Activated CD8-positive, alpha-beta memory T cell treated with anti-CD3 and anti-CD28 coated beads, Interleukin-2, amount 10 ng/mL, durations not matched to agents 7 days and 5 days (primary cell): ENCODE measurements at regions of chr14 and their contacts with region 1.

Region 1: DNA sequence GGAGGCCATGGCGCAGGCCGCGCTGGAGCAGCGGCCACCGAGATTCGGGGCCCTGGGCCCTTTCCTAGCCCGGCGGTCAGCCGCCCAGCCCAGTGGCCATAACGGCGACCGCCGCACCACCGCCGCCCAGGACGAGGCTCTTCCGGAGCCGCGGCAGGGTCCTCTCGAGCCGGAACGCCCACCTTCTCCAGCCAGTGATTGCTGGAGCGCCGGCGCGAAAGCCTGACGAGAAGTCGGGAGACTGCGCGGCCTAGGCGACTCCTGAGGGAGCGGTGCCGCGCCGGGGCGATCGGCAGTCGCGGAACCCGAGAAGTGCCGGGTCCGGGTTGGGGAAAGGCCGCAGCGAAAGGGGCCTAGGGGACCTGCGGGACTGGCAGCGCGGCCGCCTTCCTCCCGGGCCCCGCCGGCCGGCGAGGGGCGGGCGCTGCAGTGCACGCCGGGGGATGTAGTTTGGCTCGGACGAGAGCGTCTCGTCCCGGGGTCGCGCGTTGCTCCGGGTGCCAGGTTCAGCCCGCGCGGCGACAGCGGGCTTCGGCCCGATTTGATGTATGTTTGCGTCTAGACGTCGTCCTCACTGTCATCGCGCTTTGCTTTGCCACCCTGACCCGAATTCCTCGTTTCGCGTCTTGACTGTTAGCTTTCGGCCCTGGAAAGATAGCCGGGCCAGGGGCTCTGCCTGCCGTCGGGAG is at the start of gene VTI1B:
- DNase-seq: peak; percentile 80
- ATAC-seq: peak; percentile 92
- H3K4me3 Mint-ChIP-seq: peak within 1 kb of the TSS; percentile 90
- H3K27ac Mint-ChIP-seq: peak within 1 kb of the TSS; percentile 83
- H3K4me1 Mint-ChIP-seq: peaks cover 33% of the 10 kb centered on the region
- H3K27me3 Mint-ChIP-seq: no peaks in the 10 kb centered on the region
- total RNA-seq, gene VTI1B: 69.2 to 73.5 TPM

Region 2: DNA sequence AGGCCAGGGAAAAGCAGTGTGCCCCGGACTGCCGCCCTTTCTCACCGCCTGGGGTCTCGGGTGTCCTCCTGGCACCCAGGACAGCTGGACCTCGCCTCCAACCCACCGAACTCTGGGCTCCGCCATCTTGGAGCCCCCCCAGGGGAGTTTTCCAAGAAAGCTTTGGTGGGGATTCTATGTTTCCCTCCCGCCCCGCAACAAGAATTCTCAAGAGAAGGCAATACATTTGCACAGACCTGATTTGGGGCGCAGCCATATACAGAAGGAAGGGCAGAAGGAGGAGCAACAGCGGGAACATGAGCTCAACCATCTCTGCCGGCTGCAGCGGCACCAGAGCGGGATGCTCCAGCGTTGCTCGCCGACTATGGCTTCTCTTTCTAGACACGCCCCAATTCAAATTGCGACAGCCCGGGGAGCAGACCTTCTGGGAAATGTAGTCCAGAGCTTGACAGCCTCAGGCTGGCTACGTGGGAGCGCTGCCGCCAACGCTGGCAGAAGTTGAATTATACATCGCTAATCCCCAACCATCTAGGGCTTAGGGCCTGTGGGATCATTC is 20.8 kb after region 1 on chr14 and contains the start of gene RDH11:
- CTCF ChIA-PET with region 1: interaction called, 11 read pairs
- DNase-seq: peak; percentile 92
- ATAC-seq: peak; percentile 89
- H3K4me3 Mint-ChIP-seq: peak within 1 kb of the TSS; percentile 85
- H3K27ac Mint-ChIP-seq: peak within 1 kb of the TSS; percentile 91
- H3K4me1 Mint-ChIP-seq: peaks cover 33% of the 10 kb centered on the region
- H3K27me3 Mint-ChIP-seq: no peaks in the 10 kb centered on the region
- total RNA-seq, gene RDH11: 49.6 to 59.8 TPM